ENCODE measurements at regions of chr7 and their contacts with region 1.

Region 1: DNA sequence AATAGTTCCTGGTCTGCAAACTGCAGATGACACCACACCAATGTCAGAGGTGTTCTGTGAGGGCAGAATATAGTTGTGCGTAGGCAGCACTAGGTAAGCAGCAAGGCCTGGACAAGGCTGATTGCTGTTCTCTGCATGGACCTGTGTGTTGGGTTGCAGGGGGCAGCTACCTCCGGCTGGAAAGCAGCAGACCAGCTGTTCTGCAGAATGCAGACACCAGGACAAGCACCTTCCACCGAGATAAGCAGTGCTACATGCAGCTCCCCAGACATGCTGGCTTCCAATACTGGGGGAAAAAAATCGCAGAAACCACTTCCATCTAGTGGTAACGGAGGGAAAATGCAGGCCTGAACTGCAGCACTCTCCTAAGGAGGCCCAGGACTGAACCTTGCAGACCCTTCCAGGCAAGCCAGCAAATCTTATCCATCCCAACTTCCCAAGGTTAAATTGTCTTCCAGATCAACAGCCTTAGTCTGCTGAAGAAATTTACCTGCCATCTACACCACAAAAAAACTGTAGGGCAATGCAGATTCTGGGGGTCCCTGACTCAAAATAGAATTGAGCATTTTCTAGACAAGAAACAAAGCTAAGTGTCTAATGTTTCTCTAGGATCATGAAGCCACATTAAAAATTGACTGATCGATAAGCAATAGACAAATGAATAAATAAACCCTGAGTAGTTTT is 50.5 kb upstream of the COBL start:
- DNase-seq: peak in 1 of 3 donors; percentile 53
- ATAC-seq: peak; percentile 89 to 95 (median 92)
- H3K4me3 ChIP-seq: no peak overlapping the region
- H3K27ac ChIP-seq: no peak overlapping the region
- H3K4me1 ChIP-seq: peaks cover 0 to 10% (median 2%) of the 10 kb centered on the region in 4 donors
- H3K27me3 ChIP-seq: no peaks in the 10 kb centered on the region
- CTCF ChIP-seq: peak; percentile 61 to 86 (median 72)
- POLR2A ChIP-seq: no peak

Region 2: GRCh38 chr7:50467817-50468610 is 899.1 kb before region 1 on chr7:
- intact Hi-C with region 1: loop called in 1 of 2 experiments (anchors 10 kb)
- DNase-seq: peak; percentile 82 to 84 (median 84)
- ATAC-seq: peak; percentile 96 to 100 (median 98)
- H3K4me3 ChIP-seq: no peak overlapping the region
- H3K27ac ChIP-seq: no peak overlapping the region
- H3K4me1 ChIP-seq: peaks cover 0 to 3% (median 0%) of the 10 kb centered on the region in 4 donors
- H3K27me3 ChIP-seq: no peaks in the 10 kb centered on the region
- CTCF ChIP-seq: peak; percentile 79 to 90 (median 86)
- POLR2A ChIP-seq: no peak

Region 3: DNA sequence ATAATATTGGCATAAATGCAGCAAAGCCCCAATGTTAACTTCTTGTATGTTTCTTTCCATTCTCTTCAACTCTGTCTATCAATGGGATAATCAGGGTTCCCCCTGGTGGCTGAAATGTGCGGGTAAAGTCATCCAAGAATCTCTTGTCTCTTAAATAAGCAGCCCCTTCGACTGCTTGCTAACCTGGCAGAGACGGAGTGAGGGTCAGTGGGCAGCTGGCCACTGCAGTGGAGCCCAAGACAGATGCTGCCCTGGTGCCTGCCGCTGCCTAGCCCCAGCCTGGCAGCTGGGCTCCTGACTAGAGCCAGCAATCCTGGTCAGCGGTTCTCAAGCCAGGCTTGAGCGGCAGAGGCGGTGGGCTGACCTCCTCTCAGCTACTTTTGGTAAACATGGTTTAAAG is 299.3 kb before region 1 on chr7:
- intact Hi-C with region 1: no loop called
- DNase-seq: peak in 1 of 3 donors; percentile 40
- ATAC-seq: peak; percentile 53 to 62 (median 56)
- H3K4me3 ChIP-seq: no peak overlapping the region
- H3K27ac ChIP-seq: no peak overlapping the region
- H3K4me1 ChIP-seq: peaks cover 0 to 14% (median 5%) of the 10 kb centered on the region in 4 donors
- H3K27me3 ChIP-seq: no peaks in the 10 kb centered on the region
- CTCF ChIP-seq: peak; percentile 59 to 65 (median 62)
- POLR2A ChIP-seq: no peak

Region 4: DNA sequence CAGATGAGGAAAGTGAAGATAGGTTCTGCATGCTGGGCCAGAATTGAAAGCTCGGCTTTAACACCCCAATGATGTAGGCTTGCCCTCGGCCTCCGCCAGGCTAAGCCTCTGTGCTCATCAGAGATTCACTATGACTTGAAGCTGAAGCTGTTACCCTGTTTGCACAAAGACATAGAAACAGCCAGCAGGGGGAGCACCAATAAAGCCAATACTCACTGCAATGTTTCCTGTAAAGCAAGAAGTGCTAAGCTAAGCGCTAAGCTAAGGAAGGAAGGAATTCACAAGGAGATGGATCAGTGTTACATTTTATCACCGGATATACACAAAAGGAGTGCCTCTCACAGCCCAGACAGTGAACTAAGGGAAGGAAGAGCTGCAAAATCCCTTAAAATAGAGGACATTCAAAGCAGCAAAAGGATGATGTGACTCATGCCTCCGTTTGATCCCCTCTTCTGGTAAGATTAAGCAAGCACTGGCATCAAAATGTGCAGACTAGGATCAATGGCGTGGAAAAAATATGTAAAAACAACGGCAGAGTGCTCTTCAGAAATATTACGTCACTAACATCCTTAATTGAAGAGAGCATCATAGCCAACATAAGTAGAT is 204.2 kb before region 1 on chr7:
- intact Hi-C with region 1: loop called (anchors 5 to 10 kb)
- DNase-seq: peak in 2 of 3 donors; percentile 56 to 78
- ATAC-seq: peak; percentile 93 to 94 (median 94)
- H3K4me3 ChIP-seq: no peak overlapping the region
- H3K27ac ChIP-seq: no peak overlapping the region
- H3K4me1 ChIP-seq: peaks cover 0 to 8% (median 0%) of the 10 kb centered on the region in 4 donors
- H3K27me3 ChIP-seq: no peaks in the 10 kb centered on the region
- CTCF ChIP-seq: peak; percentile 81 to 86 (median 84)
- POLR2A ChIP-seq: no peak

Region 5: GRCh38 chr7:51234139-51234538 is 132.9 kb before region 1 on chr7:
- intact Hi-C with region 1: loop called in 1 of 2 experiments (anchors 10 kb)
- DNase-seq: no peak
- ATAC-seq: peak in 2 of 4 donors; percentile 9 to 12
- H3K4me3 ChIP-seq: no peak overlapping the region
- H3K27ac ChIP-seq: peak overlapping the region in 1 of 3 donors; percentile 7
- H3K4me1 ChIP-seq: peaks cover 0 to under 1% (median 0%) of the 10 kb centered on the region in 4 donors
- H3K27me3 ChIP-seq: no peaks in the 10 kb centered on the region
- CTCF ChIP-seq: no peak
- POLR2A ChIP-seq: no peak

Region 6: GRCh38 chr7:51263631-51264484 is 103.2 kb before region 1 on chr7:
- intact Hi-C with region 1: loop called in 1 of 2 experiments (anchors 10 kb)
- DNase-seq: no peak
- ATAC-seq: peak; percentile 35 to 73 (median 62)
- H3K4me3 ChIP-seq: peak overlapping the region in 1 of 3 donors; percentile 16
- H3K27ac ChIP-seq: peak overlapping the region; percentile 47 to 89 (median 68)
- H3K4me1 ChIP-seq: peaks cover 0 to 44% (median 20%) of the 10 kb centered on the region in 4 donors
- H3K27me3 ChIP-seq: no peaks in the 10 kb centered on the region
- CTCF ChIP-seq: no peak
- POLR2A ChIP-seq: no peak

Region 7: DNA sequence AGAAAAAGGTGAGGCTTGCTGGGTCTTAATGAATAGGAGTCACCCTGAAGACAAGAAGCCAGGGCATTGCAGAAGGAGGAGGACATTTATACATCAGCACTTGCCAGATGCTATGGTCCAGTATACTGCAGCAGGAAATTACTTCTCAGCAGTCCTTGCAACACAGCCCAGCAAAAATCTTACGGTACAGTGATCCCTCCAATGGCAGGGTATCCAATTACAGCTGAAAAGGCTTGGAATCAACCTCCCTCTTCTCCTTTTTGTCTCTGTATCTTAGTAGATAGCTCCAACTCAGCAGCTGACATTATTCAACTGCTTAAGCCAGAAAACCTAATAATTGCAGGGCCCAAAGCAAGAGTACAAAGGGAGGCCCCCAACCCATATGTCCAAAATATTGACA is 77.9 kb after region 1 on chr7:
- intact Hi-C with region 1: no loop called
- DNase-seq: no peak
- ATAC-seq: no peak
- H3K4me3 ChIP-seq: no peak overlapping the region
- H3K27ac ChIP-seq: no peak overlapping the region
- H3K4me1 ChIP-seq: no peaks in the 10 kb centered on the region
- H3K27me3 ChIP-seq: no peaks in the 10 kb centered on the region
- CTCF ChIP-seq: no peak
- POLR2A ChIP-seq: no peak